Breast epithelium (tissue), 4 donors: ENCODE measurements at regions of chr7 and their contacts with region 1.

Region 1: GRCh38 chr7:4361757-4362156 is 320.3 kb upstream of the FOXK1 start:
- DNase-seq: no peak
- H3K4me3 ChIP-seq: no peak overlapping the region
- H3K27ac ChIP-seq: no peak overlapping the region
- H3K4me1 ChIP-seq: no peaks in the 10 kb centered on the region
- H3K27me3 ChIP-seq: peaks cover 0 to 5% of the 10 kb centered on the region in 2 donors
- CTCF ChIP-seq: no peak
- POLR2A ChIP-seq: no peak

Region 2: GRCh38 chr7:3128462-3129173 is 1233.1 kb before region 1 on chr7:
- intact Hi-C with region 1: loop called (anchors 5 kb)
- DNase-seq: no peak
- H3K4me3 ChIP-seq: no peak overlapping the region
- H3K27ac ChIP-seq: no peak overlapping the region
- H3K4me1 ChIP-seq: no peaks in the 10 kb centered on the region
- H3K27me3 ChIP-seq: no peaks in the 10 kb centered on the region
- CTCF ChIP-seq: no peak
- POLR2A ChIP-seq: no peak

Region 3: GRCh38 chr7:4343272-4344247 is 18.2 kb before region 1 on chr7:
- intact Hi-C with region 1: loop called (anchors 1 kb)
- DNase-seq: no peak
- H3K4me3 ChIP-seq: no peak overlapping the region
- H3K27ac ChIP-seq: no peak overlapping the region
- H3K4me1 ChIP-seq: no peaks in the 10 kb centered on the region
- H3K27me3 ChIP-seq: no peaks in the 10 kb centered on the region
- CTCF ChIP-seq: no peak
- POLR2A ChIP-seq: no peak

Region 4: GRCh38 chr7:4406288-4407058 is 44.7 kb after region 1 on chr7:
- intact Hi-C with region 1: no loop called
- DNase-seq: no peak
- H3K4me3 ChIP-seq: no peak overlapping the region
- H3K27ac ChIP-seq: no peak overlapping the region
- H3K4me1 ChIP-seq: no peaks in the 10 kb centered on the region
- H3K27me3 ChIP-seq: no peaks in the 10 kb centered on the region
- CTCF ChIP-seq: no peak
- POLR2A ChIP-seq: no peak

Region 5: GRCh38 chr7:4631664-4632171 is 270.0 kb after region 1 on chr7:
- intact Hi-C with region 1: no loop called
- DNase-seq: peak; percentile 68 to 72
- H3K4me3 ChIP-seq: peak overlapping the region; percentile 20 to 55 (median 36)
- H3K27ac ChIP-seq: peak overlapping the region in 1 of 2 donors; percentile 33
- H3K4me1 ChIP-seq: peaks cover 0 to 11% of the 10 kb centered on the region in 2 donors
- H3K27me3 ChIP-seq: no peaks in the 10 kb centered on the region
- CTCF ChIP-seq: peak; percentile 37 to 77 (median 70)
- POLR2A ChIP-seq: no peak